ENCODE measurements at regions of chr12 and their contacts with region 1.

Region 1: DNA sequence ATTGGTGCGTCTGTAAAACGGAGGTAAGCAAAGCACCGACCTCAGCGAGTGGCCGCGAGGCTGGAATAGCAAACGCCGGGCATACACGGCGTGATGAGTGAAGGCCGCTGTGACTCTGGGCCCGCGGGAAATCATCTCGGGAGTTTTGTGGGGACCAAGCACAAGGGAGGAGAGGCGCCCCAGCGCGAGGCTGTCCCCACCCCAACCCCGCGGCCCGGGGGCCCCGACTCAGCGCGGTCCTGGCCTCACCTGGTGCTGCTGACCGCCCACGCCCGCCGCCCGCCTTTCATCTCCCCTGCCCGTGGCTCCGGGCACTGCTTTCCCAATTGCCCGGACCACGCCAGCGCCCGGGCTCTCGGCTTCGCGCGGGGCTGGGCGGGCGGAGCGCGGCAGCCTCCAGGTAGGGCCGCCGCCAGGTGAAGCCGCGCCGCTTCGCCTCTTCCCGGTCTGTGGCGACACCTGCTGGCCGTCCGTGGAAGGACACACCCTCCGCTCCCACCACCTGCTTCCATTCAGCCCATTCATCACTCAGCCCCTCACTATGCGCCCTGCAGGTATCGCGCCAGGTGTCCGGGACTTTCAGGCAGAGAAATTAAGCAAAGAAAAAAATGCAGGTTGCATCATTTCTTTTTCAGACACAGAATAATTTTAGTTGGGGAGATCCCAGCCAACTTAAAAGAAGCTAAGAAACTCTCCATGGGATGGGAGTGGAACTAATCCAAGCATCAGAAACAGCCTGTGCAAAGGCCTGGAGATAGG is 360.4 kb downstream of the MED13L start:
- DNase-seq: peak; percentile 17
- ATAC-seq: peak; percentile 91
- H3K4me3 ChIP-seq: peak overlapping the region in 1 of 2 experiments; percentile 4; a peak in 1 of 4 replicates
- H3K27ac ChIP-seq: no peak overlapping the region
- H3K4me1 ChIP-seq: no peaks in the 10 kb centered on the region
- H3K27me3 ChIP-seq: peaks cover 6% of the 10 kb centered on the region
- CTCF ChIP-seq: peak; percentile 96

Region 2: GRCh38 chr12:114662512-114663177 is 1254.4 kb before region 1 on chr12:
- CTCF ChIA-PET with region 1: no interaction called
- POLR2A ChIA-PET with region 1: no interaction called
- in situ Hi-C with region 1: no loop called
- intact Hi-C with region 1: loop called (anchors 2 kb)
- DNase-seq: peak; percentile 64
- ATAC-seq: peak; percentile 74
- H3K4me3 ChIP-seq: no peak overlapping the region
- H3K27ac ChIP-seq: no peak overlapping the region
- H3K4me1 ChIP-seq: no peaks in the 10 kb centered on the region
- H3K27me3 ChIP-seq: no peaks in the 10 kb centered on the region; the same call in 1 of the 2 replicates
- CTCF ChIP-seq: peak; percentile 91

Region 3: GRCh38 chr12:115934046-115934445 is 17.0 kb after region 1 on chr12:
- CTCF ChIA-PET with region 1: no interaction called
- POLR2A ChIA-PET with region 1: no interaction called
- in situ Hi-C with region 1: no loop called
- intact Hi-C with region 1: no loop called
- DNase-seq: no peak
- ATAC-seq: no peak
- H3K4me3 ChIP-seq: no peak overlapping the region
- H3K27ac ChIP-seq: no peak overlapping the region
- H3K4me1 ChIP-seq: no peaks in the 10 kb centered on the region
- H3K27me3 ChIP-seq: 0 out of 2 replicates have a peak, but pooled peaks cover 2% of the 10 kb centered on the region
- CTCF ChIP-seq: no peak